T-cell (primary cell): ENCODE measurements at regions of chr2 and their contacts with region 1.

Region 1: DNA sequence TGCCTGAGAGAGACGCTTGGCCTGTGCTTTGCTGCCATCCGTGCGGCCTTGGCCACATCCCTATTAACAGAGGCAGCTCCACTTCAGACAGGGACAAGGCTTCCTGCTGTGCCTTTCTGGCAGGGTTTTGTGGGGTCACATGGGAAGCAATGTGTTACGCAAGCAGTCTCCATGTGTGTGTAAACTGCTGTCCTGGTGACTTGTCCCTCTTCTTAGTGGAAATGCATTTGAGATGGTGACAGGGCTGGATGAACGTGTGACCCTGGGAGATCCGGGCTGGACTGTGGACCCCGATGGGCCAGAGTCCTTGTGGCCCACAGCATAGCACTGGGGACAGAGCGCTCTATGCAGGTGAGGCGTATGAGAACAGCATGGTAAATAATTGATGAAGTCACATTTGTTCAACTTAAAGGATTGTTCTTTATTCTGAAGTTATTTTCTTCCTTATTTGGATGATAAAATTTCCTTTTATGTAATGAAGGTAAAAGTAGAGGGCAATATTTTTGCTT is 23.2 kb downstream of the ASB1 start:
- DNase-seq: no peak
- ATAC-seq: no peak
- H3K4me3 ChIP-seq: no peak overlapping the region
- H3K4me3 Mint-ChIP-seq: no peak overlapping the region
- H3K27ac ChIP-seq: no peak overlapping the region
- H3K27ac Mint-ChIP-seq: no peak overlapping the region
- H3K4me1 ChIP-seq: no peaks in the 10 kb centered on the region
- H3K4me1 Mint-ChIP-seq: peaks cover 0 to 8% (median 0%) of the 10 kb centered on the region in 3 donors
- H3K27me3 ChIP-seq: no peaks in the 10 kb centered on the region
- H3K27me3 Mint-ChIP-seq: no peaks in the 10 kb centered on the region

Region 2: DNA sequence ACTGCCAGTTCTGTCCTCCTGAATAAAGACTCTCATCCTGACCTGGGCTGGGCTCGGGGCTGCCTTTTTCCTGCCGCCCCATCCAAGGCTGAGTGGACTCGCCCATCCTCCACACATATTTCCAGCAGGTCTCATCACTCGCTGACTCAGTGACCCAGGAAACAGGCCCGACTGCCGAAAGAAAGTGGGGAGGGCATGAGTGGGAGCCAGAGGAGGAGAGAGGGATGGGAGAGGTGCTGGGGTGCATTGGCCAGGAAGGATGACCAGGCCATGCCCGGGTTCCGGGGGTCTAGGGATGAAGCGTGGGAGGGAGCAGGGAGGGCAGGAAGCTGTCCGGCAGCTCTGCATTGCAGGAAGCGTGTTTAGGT is 464.7 kb after region 1 on chr2:
- CTCF ChIA-PET with region 1: interaction called in 1 of 2 experiments, 10 read pairs
- POLR2A ChIA-PET with region 1: no interaction called
- DNase-seq: no peak
- ATAC-seq: no peak
- H3K4me3 ChIP-seq: no peak overlapping the region
- H3K4me3 Mint-ChIP-seq: no peak overlapping the region
- H3K27ac ChIP-seq: no peak overlapping the region
- H3K27ac Mint-ChIP-seq: no peak overlapping the region
- H3K4me1 ChIP-seq: no peaks in the 10 kb centered on the region
- H3K4me1 Mint-ChIP-seq: no peaks in the 10 kb centered on the region
- H3K27me3 ChIP-seq: peaks cover 0 to 40% of the 10 kb centered on the region in 2 experiments
- H3K27me3 Mint-ChIP-seq: peaks cover 13 to 21% of the 10 kb centered on the region in 2 donors